Colonic mucosa (tissue), 4 donors: ENCODE measurements at regions of chr2 and their contacts with region 1.

Region 1: DNA sequence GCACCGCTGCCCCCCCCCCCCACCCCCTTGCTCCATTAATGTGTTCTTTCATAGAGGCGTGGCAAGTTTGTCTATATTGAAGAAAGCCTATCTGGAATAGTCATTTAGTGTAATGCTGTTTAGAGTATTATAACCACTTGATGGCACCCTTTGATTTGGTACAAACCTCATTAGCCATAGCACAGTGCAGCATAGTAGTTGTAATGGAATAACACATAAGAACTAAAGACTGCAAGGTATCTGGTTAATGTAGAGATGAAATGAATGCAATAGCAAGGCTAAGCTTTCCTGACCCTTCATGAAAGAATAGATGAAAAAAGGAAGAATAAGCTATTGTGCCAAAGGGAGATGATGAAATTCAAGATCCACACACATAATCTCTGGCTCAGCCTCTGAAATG is 81.9 kb downstream of the EHBP1 start:
- DNase-seq: no peak
- H3K4me3 ChIP-seq: no peak overlapping the region
- H3K27ac ChIP-seq: no peak overlapping the region
- H3K4me1 ChIP-seq: no peaks in the 10 kb centered on the region
- H3K27me3 ChIP-seq: no peaks in the 10 kb centered on the region
- CTCF ChIP-seq: no peak

Region 2: GRCh38 chr2:63424329-63425078 is 637.1 kb after region 1 on chr2:
- intact Hi-C with region 1: loop called (anchors 5 kb)
- DNase-seq: no peak
- H3K4me3 ChIP-seq: no peak overlapping the region
- H3K27ac ChIP-seq: no peak overlapping the region
- H3K4me1 ChIP-seq: no peaks in the 10 kb centered on the region
- H3K27me3 ChIP-seq: no peaks in the 10 kb centered on the region
- CTCF ChIP-seq: peak; percentile 26

Region 3: DNA sequence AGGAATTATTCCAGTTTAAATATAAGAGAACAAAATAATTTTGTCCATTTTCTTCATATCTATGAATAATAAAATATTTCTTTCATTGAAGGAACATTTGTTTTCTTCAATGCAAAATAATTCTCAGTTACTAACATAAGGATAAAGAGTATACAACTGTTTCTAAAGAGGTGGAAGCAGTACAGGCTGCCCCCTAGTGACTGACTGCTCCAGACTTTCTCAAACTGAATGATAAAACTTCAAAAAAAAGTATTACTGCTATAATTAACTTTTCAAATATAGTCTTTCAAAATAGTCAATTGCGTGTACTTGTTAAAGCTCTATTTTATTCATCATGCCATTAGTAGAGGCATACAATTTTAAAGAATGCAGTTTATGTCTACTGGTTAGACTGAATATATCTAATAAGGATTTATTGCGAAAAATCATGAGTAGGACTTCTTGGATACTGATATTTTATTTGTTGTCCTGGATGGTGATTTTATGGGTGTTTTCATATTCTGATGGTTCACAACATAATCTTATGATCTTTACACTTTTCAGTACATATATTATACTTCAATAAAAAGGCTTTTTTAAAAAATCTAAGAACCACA is 700.8 kb after region 1 on chr2:
- intact Hi-C with region 1: loop called (anchors 10 kb)
- DNase-seq: peak; percentile 19
- H3K4me3 ChIP-seq: no peak overlapping the region
- H3K27ac ChIP-seq: no peak overlapping the region
- H3K4me1 ChIP-seq: no peaks in the 10 kb centered on the region
- H3K27me3 ChIP-seq: no peaks in the 10 kb centered on the region
- CTCF ChIP-seq: peak; percentile 33